ENCODE measurements at regions of chr11 and their contacts with region 1.

Region 1: DNA sequence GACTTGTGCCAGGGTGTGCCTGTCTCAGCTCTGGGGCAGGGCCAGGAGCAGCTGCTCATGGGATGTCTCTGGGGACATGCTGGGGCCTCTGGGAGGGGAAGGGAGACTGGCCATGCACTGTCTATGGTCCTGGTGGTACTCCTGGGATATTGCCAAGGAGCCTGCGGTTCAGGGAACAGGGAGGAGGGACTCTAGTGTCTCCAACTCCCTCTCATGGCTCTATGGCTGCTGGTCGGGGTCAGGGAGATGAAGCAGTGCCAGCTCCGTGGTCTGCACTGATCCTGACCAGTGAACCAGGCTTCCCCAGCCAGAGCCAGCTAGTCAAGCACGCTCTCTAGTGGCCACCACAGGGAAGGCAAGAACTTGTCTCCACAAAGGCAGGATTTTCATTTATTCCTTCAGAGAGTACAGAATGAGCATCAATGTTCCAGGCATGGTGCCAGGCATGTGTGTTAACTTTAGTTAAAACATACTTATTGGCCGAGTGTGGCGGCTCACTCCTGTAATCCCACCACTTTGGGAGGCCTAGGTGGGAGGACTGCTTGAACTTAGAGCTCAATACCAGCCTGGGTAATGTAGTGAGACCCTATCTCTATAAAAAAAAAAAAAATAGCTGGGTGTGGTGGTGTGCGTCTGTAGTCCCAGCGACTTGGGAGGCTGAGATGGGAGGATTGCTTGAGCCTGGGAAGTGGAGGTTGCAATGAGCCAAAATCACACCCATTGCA is 2.5 kb upstream of the BEST1 start:
- DNase-seq: peak; percentile 73
- ATAC-seq: peak; percentile 85
- H3K4me3 ChIP-seq: no peak overlapping the region
- H3K27ac ChIP-seq: no peak overlapping the region
- H3K4me1 ChIP-seq: peaks cover 21% of the 10 kb centered on the region; the same call in 1 of the 2 replicates
- H3K27me3 ChIP-seq: peaks cover 1 to 19% of the 10 kb centered on the region in 2 experiments; a peak in 3 of 5 replicates
- CTCF ChIP-seq: peak; percentile 97
- EP300 ChIP-seq: no peak
- POLR2A ChIP-seq: no peak
- RAD21 ChIP-seq: peak; percentile 99

Region 2: GRCh38 chr11:61908730-61909315 is 38.8 kb before region 1 on chr11:
- CTCF ChIA-PET with region 1: no interaction called
- POLR2A ChIA-PET with region 1: interaction called, 21 read pairs
- in situ Hi-C with region 1: no loop called
- intact Hi-C with region 1: no loop called
- DNase-seq: no peak
- ATAC-seq: no peak
- H3K4me3 ChIP-seq: no peak overlapping the region
- H3K27ac ChIP-seq: no peak overlapping the region
- H3K4me1 ChIP-seq: peaks cover 35% of the 10 kb centered on the region
- H3K27me3 ChIP-seq: peaks cover 1 to 8% of the 10 kb centered on the region in 2 experiments; a peak in 2 of 5 replicates
- CTCF ChIP-seq: no peak
- EP300 ChIP-seq: no peak
- POLR2A ChIP-seq: no peak
- RAD21 ChIP-seq: no peak

Region 3: DNA sequence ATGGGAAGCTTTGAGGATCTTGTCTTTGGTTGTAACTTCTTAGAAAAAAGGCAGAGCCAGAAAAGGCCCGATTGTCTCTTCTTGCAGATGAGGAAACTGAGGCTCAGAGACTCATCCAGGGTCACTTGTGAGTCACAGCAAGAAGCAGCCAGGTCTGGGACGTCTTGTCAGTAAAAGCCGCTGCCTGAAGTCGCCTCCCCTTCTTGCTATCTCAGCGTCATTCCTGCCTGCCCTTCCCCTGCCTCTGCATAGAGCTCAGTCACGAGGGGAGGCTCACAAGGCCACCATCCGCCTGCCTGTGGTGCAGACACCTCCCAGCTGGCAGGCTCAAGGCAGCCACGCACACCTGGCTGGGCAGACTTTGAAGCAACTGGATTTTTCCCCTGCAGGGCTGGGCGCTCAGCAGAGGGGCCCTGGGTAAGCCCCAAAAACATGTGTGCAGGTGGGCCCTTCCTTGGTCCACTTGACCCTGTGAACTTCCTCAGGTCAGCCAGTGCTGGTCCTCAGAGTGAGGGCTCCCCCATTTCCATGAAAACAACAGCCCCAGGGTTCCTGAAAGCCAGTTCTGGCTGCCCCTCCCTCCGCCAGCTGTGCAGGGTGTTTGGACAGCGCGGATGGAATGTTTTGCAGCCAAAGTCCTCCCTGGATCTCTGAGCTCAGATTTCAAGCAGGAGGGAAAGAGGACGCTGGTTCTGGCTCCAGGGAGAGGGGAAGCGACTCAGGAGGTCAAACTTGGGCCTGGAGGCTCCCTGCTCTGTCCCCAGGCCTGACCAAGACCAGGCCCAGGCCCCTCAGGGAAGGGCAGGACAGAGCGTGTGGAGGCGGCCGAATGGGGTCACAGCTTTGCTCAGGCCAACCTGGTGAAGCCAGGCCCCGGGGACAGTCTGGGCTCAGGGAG is 24.2 kb before region 1 on chr11:
- CTCF ChIA-PET with region 1: no interaction called
- POLR2A ChIA-PET with region 1: interaction called, 24 read pairs
- in situ Hi-C with region 1: no loop called
- intact Hi-C with region 1: no loop called
- DNase-seq: peak; percentile 87
- ATAC-seq: peak; percentile 93
- H3K4me3 ChIP-seq: peak overlapping the region; percentile 27 to 66 (median 42)
- H3K27ac ChIP-seq: peak overlapping the region; percentile 75
- H3K4me1 ChIP-seq: peaks cover 48% of the 10 kb centered on the region
- H3K27me3 ChIP-seq: peaks cover 6 to 24% of the 10 kb centered on the region in 2 experiments
- CTCF ChIP-seq: peak; percentile 30; the same call in 1 of the 2 replicates
- EP300 ChIP-seq: peak in 1 of 2 experiments; percentile 59; a peak in 1 of 4 replicates
- POLR2A ChIP-seq: peak; percentile 38 to 63; a peak in 2 of 4 replicates
- RAD21 ChIP-seq: no peak

Region 4: GRCh38 chr11:62004473-62004872 is 56.8 kb after region 1 on chr11:
- CTCF ChIA-PET with region 1: no interaction called
- POLR2A ChIA-PET with region 1: interaction called, 21 read pairs
- in situ Hi-C with region 1: no loop called
- intact Hi-C with region 1: no loop called
- DNase-seq: no peak
- ATAC-seq: no peak
- H3K4me3 ChIP-seq: no peak overlapping the region
- H3K27ac ChIP-seq: peak overlapping the region; percentile 26
- H3K4me1 ChIP-seq: peaks cover 67% of the 10 kb centered on the region
- H3K27me3 ChIP-seq: no peaks in the 10 kb centered on the region
- CTCF ChIP-seq: no peak
- EP300 ChIP-seq: no peak
- POLR2A ChIP-seq: no peak
- RAD21 ChIP-seq: no peak

Region 5: GRCh38 chr11:62054484-62055121 is 107.0 kb after region 1 on chr11:
- CTCF ChIA-PET with region 1: interaction called, 6 read pairs
- POLR2A ChIA-PET with region 1: interaction called, 10 read pairs
- in situ Hi-C with region 1: loop called (anchors 5 kb)
- intact Hi-C with region 1: loop called (anchors 2 kb)
- DNase-seq: peak; percentile 78
- ATAC-seq: peak; percentile 66; the same call in 2 of the 3 replicates
- H3K4me3 ChIP-seq: no peak overlapping the region
- H3K27ac ChIP-seq: no peak overlapping the region
- H3K4me1 ChIP-seq: peaks cover 27% of the 10 kb centered on the region
- H3K27me3 ChIP-seq: peaks cover 0 to 3% of the 10 kb centered on the region in 2 experiments; a peak in 2 of 5 replicates
- CTCF ChIP-seq: peak; percentile 91
- EP300 ChIP-seq: no peak
- POLR2A ChIP-seq: no peak
- RAD21 ChIP-seq: peak; percentile 82

Region 6: DNA sequence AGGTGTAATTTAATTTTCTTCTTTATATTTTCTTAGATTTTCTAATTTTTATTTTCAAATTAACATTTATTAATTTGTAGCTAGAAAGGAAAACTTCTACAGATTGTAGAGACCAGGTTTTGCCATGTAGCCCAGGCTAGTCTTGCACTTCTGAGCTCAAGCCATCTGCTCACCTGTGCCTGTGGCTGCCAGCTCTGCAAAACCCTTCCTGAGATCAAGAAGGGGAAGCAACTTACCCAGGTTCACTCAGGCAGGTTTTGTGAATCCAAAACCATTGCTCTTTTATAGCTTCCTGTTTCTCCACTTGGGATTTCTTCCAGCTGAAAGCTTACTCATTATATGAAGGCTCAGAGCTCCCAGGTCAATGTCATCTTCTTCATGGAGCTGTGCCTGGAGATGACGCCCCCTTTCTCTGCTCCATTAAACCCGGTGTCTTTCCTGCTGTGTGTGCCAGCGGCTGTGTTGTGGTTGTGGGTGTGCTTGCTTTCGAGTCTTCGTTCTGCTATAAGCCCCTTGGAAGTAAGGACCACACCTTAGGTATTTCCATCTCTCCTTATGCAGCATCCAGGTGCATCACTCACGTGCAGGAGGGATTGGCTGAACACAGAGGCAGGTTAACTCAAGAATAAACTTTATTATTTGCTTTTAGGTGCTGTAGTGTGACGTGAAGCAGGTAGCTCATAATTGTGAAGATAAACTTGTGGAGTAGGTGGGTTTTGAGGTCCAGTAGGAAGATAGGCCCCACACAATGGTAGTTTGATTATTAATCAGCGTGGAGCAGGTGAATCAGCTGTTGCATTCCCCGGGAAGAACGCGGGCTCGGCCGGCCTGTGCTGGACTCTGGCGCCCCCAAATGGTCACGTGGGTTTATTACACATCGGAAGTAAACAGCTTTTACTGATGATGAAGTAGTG is 134.0 kb after region 1 on chr11:
- CTCF ChIA-PET with region 1: interaction called, 3 read pairs
- POLR2A ChIA-PET with region 1: interaction called, 10 read pairs
- in situ Hi-C with region 1: no loop called
- intact Hi-C with region 1: no loop called
- DNase-seq: peak; percentile 46
- ATAC-seq: peak; percentile 71
- H3K4me3 ChIP-seq: no peak overlapping the region; a peak in 1 of 6 replicates
- H3K27ac ChIP-seq: no peak overlapping the region
- H3K4me1 ChIP-seq: peaks cover 6% of the 10 kb centered on the region; the same call in 1 of the 2 replicates
- H3K27me3 ChIP-seq: no peaks in the 10 kb centered on the region
- CTCF ChIP-seq: peak; percentile 92
- EP300 ChIP-seq: no peak
- POLR2A ChIP-seq: no peak
- RAD21 ChIP-seq: peak; percentile 89

Region 7: DNA sequence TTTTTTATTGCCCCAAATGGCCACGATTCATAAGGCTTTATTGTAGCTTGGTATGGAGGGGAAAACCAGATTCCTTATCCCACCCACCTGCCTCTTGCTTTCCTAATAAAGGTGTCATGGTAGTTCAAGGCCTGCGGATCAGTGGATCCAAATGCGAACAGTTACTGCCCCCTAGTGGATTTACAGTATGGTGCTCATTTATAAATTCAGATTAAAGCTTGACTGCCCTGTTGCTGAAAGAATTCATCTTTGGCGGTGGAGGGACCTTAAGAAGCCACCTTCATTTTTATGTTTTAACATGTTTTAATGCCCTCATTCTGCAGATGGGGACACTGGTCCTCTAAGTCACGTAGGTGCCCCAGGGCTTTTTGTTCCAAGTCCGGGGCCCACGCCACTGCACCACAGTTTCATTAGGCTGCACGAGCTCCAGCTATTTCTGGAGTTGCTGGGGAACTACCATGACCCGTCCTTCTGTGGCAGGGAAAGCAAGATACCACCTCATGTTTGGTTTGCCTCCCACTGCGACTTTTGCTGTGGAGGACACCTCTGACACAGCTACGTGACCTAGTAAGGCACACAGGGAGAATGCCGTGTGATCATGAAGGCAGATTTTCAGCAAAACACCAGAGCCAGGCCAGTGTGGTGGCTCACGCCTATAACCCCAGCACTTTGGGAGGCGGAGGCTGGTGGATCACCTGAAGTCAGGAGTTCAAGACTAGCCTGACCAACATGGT is 160.5 kb after region 1 on chr11:
- CTCF ChIA-PET with region 1: no interaction called
- POLR2A ChIA-PET with region 1: no interaction called
- in situ Hi-C with region 1: no loop called
- intact Hi-C with region 1: loop called (anchors 5 kb)
- DNase-seq: peak; percentile 65
- ATAC-seq: peak; percentile 73
- H3K4me3 ChIP-seq: no peak overlapping the region
- H3K27ac ChIP-seq: no peak overlapping the region
- H3K4me1 ChIP-seq: peaks cover 30% of the 10 kb centered on the region
- H3K27me3 ChIP-seq: peaks cover 0 to 6% of the 10 kb centered on the region in 2 experiments; a peak in 2 of 5 replicates
- CTCF ChIP-seq: peak; percentile 84
- EP300 ChIP-seq: no peak
- POLR2A ChIP-seq: no peak
- RAD21 ChIP-seq: peak; percentile 76

Region 8: GRCh38 chr11:62217191-62217748 is 269.6 kb after region 1 on chr11:
- CTCF ChIA-PET with region 1: no interaction called
- POLR2A ChIA-PET with region 1: no interaction called
- in situ Hi-C with region 1: no loop called
- intact Hi-C with region 1: no loop called
- DNase-seq: peak; percentile 19
- ATAC-seq: no peak
- H3K4me3 ChIP-seq: no peak overlapping the region
- H3K27ac ChIP-seq: no peak overlapping the region
- H3K4me1 ChIP-seq: no peaks in the 10 kb centered on the region
- H3K27me3 ChIP-seq: peaks cover 0 to 18% of the 10 kb centered on the region in 2 experiments; a peak in 1 of 5 replicates
- CTCF ChIP-seq: peak; percentile 66
- EP300 ChIP-seq: no peak
- POLR2A ChIP-seq: no peak
- RAD21 ChIP-seq: peak; percentile 65

Region 9: DNA sequence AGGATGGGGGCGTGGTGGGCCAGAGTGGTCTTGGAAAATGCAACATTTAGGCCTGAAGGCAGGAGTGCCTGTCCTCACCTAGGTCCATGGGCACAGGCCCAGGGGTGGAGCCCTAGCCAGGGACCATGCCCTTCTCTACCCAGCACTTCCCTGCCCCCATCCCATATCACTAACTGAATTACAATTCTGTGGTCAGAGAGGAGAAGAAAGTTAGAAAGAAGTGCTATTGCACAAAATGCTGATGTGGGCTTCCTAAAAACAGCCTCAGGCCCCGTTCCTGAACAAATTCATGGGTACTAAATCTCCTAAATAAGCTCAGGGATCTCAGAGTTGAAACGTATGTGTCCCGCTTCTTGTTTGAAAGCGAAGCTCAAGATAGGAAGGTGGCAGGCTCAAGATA is 386.1 kb after region 1 on chr11:
- CTCF ChIA-PET with region 1: no interaction called
- POLR2A ChIA-PET with region 1: no interaction called
- in situ Hi-C with region 1: no loop called
- intact Hi-C with region 1: no loop called
- DNase-seq: no peak
- ATAC-seq: no peak
- H3K4me3 ChIP-seq: no peak overlapping the region
- H3K27ac ChIP-seq: no peak overlapping the region
- H3K4me1 ChIP-seq: peaks cover 32% of the 10 kb centered on the region
- H3K27me3 ChIP-seq: peaks cover 4 to 43% of the 10 kb centered on the region in 2 experiments; a peak in 3 of 5 replicates
- CTCF ChIP-seq: no peak
- EP300 ChIP-seq: no peak
- POLR2A ChIP-seq: no peak
- RAD21 ChIP-seq: no peak